ENCODE measurements at regions of chr10 and their contacts with region 1.

Region 1: GRCh38 chr10:87861953-87862678 is 1.2 kb downstream of the KLLN start:
- DNase-seq: peak; percentile 85 to 97 (median 93)

Region 2: DNA sequence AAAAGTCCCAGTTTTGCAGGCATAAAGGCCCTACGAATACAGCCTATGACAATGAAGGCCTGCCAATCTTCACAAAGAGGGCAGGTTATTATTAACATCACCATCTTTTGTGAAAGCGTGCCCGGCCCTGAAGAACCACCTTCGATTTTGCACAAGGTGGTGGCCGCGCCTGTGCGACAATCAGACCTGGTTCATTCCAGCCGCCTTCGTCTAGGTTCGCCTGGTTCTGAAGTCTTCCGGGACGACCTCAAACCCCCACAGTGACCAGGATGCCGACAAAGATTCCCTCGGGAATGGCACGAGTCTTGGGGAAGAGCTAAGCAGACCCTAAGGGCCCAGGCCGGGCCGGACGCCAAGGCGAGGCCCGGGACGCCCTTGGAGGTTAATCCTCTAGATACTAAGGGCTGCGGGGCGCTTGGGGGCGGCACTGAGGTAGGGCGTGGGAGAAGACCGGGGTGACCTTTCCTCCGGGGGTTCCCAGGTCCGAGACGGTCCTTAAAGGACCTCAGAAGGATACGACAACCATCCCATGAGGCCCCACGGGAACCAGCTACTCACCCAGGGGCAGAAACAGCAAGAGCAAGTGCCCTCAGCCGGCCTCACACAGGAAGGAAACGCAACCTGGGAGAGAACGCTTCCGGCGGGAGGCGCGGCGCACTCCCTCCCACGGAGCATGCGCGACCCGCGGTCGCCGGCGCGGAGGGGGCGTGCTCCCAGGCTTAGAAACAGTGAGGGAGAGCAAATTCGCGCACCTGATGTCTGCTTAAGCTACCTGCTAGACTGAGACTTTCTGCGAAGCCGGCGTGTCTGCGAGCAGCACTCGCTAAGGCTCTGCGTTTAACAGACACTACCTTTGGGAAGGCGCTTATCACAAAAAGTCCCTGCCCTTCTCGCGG is 44.3 kb before region 1 on chr10 and contains the start of gene ATAD1:
- intact Hi-C with region 1: loop called (anchors 2 kb)
- DNase-seq: peak; percentile 66 to 93 (median 85)

Region 3: DNA sequence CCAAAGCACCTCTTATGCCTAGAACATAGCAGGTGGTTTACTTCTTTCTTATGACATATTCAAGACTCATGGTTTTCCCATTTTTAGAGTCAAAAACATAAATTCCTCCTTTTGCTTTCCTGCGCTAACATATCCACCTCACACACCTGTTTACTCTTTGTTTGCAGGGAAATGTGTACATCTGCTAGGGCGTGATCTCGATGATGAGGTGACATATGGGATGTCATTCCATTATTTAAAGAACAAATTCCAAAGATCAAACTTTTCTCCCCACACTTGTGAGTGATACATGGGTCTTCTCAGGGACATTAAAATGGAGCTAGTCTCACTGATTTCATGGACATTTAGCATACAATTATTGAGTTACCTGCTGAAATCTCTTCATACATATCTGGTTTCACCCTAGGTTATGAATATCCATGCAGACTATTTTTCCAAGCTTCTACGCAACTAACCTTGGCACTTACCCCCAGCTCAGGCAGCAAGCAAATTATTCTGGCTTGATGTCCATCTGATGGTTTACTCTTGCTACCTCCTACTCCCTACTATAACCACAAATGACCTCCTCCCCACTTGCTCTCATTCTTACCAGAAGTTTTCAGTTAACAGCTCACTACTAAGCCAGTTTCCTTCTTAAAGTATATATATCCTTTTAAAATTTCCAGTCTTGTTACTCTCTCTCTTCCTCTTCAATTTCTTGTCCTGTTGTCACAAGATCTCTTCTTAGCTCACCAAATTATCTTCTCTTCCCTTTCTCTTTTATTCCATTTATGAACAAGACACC is 512.5 kb after region 1 on chr10:
- intact Hi-C with region 1: no loop called
- DNase-seq: no peak

Region 4: GRCh38 chr10:88386821-88387773 is 525.0 kb after region 1 on chr10:
- intact Hi-C with region 1: loop called (anchors 5 kb)
- DNase-seq: peak in 34 of 42 donors; percentile 12 to 84 (median 46)